B cell (primary cell): ENCODE measurements at regions of chr3 and their contacts with region 1.

Region 1: DNA sequence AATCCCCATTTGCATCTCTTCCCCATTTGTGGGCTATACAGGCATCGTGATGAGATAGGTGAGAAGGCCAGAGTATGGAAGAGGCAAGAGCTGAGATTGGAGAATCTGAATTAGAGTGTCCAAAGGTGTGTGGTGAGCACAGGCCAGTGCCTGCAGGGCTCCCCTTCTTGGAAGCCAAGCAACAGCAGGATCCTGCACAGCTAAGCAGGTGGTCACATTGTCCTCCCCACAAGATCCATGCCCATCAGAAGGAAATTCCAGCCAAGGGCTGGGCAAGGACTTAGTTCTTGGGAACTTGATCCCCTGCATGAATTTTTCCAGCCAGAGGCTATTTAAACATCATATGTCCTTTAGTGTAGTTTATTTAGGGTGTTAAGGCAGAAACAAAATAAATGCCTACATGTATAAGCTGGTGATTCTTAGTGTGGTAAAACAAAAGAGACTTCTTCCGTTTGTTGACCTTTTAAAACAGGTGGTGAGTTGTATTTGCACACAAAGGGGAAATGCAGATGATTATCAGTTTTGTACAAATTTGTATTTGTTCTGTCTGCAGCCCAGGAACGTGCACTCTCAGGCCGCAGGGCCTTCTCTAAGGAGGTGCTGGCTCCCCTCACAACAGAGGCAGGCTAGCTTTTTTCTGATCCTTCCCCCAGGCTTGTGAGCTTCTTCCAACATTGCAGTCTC is 110.2 kb downstream of the PLCL2 start:
- DNase-seq: no peak
- ATAC-seq: no peak
- H3K4me3 ChIP-seq: no peak overlapping the region
- H3K4me3 Mint-ChIP-seq: peak overlapping the region; percentile 21
- H3K27ac ChIP-seq: no peak overlapping the region
- H3K27ac Mint-ChIP-seq: peak overlapping the region; percentile 43
- H3K4me1 ChIP-seq: peaks cover 23 to 26% of the 10 kb centered on the region in 2 donors
- H3K4me1 Mint-ChIP-seq: peaks cover 74% of the 10 kb centered on the region
- H3K27me3 ChIP-seq: no peaks in the 10 kb centered on the region
- H3K27me3 Mint-ChIP-seq: no peaks in the 10 kb centered on the region
- CTCF ChIP-seq: no peak

Region 2: DNA sequence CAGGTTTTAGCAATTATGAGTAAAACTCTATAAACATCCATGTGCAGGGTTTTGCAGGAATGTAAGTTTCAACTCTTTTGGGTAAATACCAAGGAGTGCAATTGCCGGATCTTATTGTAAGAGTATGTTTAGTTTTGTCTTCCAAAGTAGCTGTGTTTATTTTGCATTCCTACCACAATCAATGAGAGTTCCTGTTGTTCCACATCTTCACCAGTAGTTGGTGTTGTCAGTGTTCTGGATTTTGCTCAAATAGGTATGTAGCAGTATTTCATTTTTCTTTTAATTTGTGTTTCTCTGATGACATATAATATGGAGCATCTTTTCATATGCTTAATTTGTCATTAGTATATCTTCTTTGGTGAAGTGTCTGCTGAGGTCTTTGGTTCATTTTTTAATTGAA is 1005.6 kb before region 1 on chr3:
- CTCF ChIA-PET with region 1: no interaction called
- POLR2A ChIA-PET with region 1: no interaction called
- intact Hi-C with region 1: loop called (anchors 5 kb)
- DNase-seq: no peak
- ATAC-seq: no peak
- H3K4me3 ChIP-seq: no peak overlapping the region
- H3K4me3 Mint-ChIP-seq: no peak overlapping the region
- H3K27ac ChIP-seq: no peak overlapping the region
- H3K27ac Mint-ChIP-seq: no peak overlapping the region
- H3K4me1 ChIP-seq: no peaks in the 10 kb centered on the region
- H3K4me1 Mint-ChIP-seq: no peaks in the 10 kb centered on the region
- H3K27me3 ChIP-seq: no peaks in the 10 kb centered on the region
- H3K27me3 Mint-ChIP-seq: peaks cover 11% of the 10 kb centered on the region
- CTCF ChIP-seq: no peak

Region 3: GRCh38 chr3:16741103-16741758 is 253.8 kb before region 1 on chr3:
- CTCF ChIA-PET with region 1: no interaction called
- POLR2A ChIA-PET with region 1: no interaction called
- intact Hi-C with region 1: no loop called
- DNase-seq: no peak
- ATAC-seq: no peak
- H3K4me3 ChIP-seq: no peak overlapping the region
- H3K4me3 Mint-ChIP-seq: no peak overlapping the region
- H3K27ac ChIP-seq: no peak overlapping the region
- H3K27ac Mint-ChIP-seq: no peak overlapping the region
- H3K4me1 ChIP-seq: no peaks in the 10 kb centered on the region
- H3K4me1 Mint-ChIP-seq: peaks cover 2% of the 10 kb centered on the region
- H3K27me3 ChIP-seq: no peaks in the 10 kb centered on the region
- H3K27me3 Mint-ChIP-seq: no peaks in the 10 kb centered on the region
- CTCF ChIP-seq: no peak